ENCODE measurements at regions of chr16 and their contacts with region 1.

Region 1: DNA sequence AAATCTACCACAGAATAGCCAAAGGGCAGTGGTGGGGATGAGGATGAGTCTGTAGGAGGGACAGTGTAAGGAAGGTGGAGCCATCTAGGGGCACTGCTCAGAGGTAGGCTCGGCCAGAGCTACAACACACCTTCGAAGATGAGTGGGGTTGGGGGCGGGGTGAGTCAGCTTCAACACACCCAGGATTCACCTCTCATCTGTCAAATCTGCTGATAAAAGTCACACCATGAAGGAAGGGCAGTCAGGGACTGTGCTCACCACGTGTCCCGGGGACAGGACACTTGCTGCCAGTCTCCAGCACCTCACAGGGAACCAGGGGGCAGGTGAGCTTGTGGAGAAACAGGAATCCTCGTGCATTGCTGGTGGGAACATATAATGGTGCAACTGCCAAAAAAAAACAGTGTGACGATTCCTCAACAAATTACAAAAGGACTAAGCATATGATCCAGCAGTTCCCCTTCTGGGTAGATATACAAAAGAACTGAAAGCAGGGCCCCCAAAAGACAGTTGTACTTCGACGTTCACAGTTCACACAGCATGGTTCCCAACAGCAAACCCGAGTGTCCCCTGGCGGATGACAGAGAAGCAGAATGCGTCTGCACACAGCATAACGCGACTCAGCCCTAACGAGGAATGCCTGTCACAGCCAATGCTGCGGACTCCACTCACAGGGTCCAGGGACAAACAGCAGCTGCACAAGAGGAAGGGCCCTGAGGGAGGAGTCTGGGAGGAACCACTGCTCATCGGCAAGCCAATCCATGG is 133.1 kb downstream of the ANKRD11 start:
- DNase-seq: peak; percentile 48 to 78
- ATAC-seq: peak; percentile 34 to 64
- H3K4me3 ChIP-seq: no peak overlapping the region
- H3K27ac ChIP-seq: peak overlapping the region; percentile 52 to 82 (median 76)
- H3K4me1 ChIP-seq: peaks cover 87 to 96% of the 10 kb centered on the region in 2 donors
- H3K27me3 ChIP-seq: no peaks in the 10 kb centered on the region
- CTCF ChIP-seq: peak in 1 of 5 experiments; percentile 25
- POLR2A ChIP-seq: no peak

Region 2: DNA sequence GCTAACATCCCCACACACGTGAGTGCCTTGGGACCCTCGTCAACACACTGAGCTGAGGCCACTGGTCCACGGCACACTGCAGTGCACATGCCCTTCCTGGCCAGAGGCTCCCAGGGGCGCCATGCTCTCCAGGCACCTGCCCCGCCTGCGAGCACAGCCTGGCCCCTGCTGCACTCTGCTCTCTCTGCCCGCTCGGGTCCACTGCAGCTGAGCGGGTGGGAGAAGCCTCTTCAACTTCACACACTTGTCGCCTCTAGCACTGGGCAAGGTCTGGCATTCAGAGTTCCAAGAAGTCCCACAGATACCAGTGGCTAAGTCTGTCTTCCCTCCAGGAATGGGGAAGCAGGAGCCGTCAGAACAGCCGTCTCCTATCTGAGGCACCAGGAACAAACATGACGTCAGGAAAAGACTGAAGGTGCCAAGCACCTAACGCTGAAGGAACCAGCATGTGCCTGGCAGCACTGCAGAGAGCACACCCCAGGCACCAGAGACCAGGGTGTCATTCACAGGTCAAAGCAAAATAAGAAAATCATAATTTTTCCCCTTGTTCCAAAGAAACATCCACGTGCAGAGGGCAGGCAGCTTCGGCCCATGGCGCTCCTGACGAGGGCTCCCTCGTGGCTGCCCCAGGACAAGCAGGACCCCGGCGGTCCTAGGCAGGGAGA is 56.8 kb before region 1 on chr16:
- in situ Hi-C with region 1: no loop called
- intact Hi-C with region 1: loop called (anchors 5 kb)
- DNase-seq: peak; percentile 76 to 92
- ATAC-seq: peak; percentile 81 to 84
- H3K4me3 ChIP-seq: no peak overlapping the region
- H3K27ac ChIP-seq: peak overlapping the region; percentile 91 to 97 (median 92)
- H3K4me1 ChIP-seq: peaks cover 38 to 51% of the 10 kb centered on the region in 2 donors
- H3K27me3 ChIP-seq: no peaks in the 10 kb centered on the region
- CTCF ChIP-seq: no peak
- POLR2A ChIP-seq: peak; percentile 56 to 61

Region 3: GRCh38 chr16:89334988-89335802 is 22.0 kb before region 1 on chr16:
- in situ Hi-C with region 1: no loop called
- intact Hi-C with region 1: loop called (anchors 1 kb)
- DNase-seq: peak in 1 of 2 donors; percentile 28
- ATAC-seq: peak in 1 of 2 donors; percentile 28
- H3K4me3 ChIP-seq: peak overlapping the region in 3 of 4 donors; percentile 0 to 24 (median 8)
- H3K27ac ChIP-seq: peak overlapping the region; percentile 89 to 97 (median 94)
- H3K4me1 ChIP-seq: peaks cover 80 to 84% of the 10 kb centered on the region in 2 donors
- H3K27me3 ChIP-seq: no peaks in the 10 kb centered on the region
- CTCF ChIP-seq: peak in 3 of 5 experiments; percentile 5 to 27 (median 23)
- POLR2A ChIP-seq: no peak

Region 4: GRCh38 chr16:89422905-89423630 is 65.8 kb after region 1 on chr16:
- in situ Hi-C with region 1: no loop called
- intact Hi-C with region 1: no loop called
- DNase-seq: no peak
- ATAC-seq: peak; percentile 22 to 24
- H3K4me3 ChIP-seq: no peak overlapping the region
- H3K27ac ChIP-seq: peak overlapping the region; percentile 64 to 71 (median 68)
- H3K4me1 ChIP-seq: peaks cover 68 to 73% of the 10 kb centered on the region in 2 donors
- H3K27me3 ChIP-seq: no peaks in the 10 kb centered on the region
- CTCF ChIP-seq: no peak
- POLR2A ChIP-seq: no peak

Measured in gastrocnemius medialis (tissue), 4 donors.